Activated CD8-positive, alpha-beta memory T cell treated with anti-CD3 and anti-CD28 coated beads, Interleukin-2, amount 10 ng/mL, durations not matched to agents 7 days and 5 days (primary cell): ENCODE measurements at regions of chr2 and their contacts with region 1.

Region 1: DNA sequence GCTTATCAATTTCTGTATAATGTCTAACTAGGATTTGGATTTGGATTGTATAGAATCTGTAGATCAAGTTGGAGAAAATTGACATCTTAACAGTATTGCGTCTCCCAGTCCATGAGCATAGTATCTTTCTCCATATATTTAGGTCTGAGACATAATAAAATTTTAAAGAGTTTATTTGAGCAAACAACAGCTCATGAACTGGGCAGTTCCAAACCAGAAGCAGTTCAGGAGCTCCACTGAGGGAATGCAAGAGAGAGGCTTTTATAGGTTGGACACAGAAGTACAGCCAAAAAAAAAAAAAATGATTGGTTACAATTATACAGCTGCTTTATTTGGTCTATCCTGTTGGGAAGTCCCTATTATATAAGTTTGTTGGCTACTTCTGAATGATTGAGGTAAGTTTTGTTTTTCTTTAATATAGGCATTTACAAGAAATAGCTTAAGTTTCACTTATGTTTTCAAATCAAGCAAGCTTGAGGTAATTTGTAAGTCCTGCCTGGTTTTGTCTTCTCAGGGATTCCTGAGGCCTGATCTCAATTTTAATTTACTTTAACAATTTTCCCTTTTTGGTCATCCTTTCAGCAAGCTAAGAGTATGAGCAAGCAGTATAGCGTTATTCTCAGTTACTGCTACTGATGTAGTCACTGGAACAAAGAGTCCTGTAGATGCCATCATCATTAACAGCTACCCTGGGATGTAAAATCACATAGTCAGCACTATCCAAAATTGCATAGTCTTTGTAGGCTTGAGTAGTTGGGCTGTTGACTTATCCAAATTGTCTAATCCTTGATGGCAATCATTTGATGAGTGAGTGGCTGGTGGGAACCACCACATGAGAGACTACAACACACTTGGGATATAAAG is 27.5 kb upstream of the RUFY4 start:
- DNase-seq: no peak
- ATAC-seq: peak; percentile 27
- H3K4me3 Mint-ChIP-seq: no peak overlapping the region
- H3K27ac Mint-ChIP-seq: peak overlapping the region; percentile 76
- H3K4me1 Mint-ChIP-seq: peaks cover 29% of the 10 kb centered on the region
- H3K27me3 Mint-ChIP-seq: no peaks in the 10 kb centered on the region

Region 2: DNA sequence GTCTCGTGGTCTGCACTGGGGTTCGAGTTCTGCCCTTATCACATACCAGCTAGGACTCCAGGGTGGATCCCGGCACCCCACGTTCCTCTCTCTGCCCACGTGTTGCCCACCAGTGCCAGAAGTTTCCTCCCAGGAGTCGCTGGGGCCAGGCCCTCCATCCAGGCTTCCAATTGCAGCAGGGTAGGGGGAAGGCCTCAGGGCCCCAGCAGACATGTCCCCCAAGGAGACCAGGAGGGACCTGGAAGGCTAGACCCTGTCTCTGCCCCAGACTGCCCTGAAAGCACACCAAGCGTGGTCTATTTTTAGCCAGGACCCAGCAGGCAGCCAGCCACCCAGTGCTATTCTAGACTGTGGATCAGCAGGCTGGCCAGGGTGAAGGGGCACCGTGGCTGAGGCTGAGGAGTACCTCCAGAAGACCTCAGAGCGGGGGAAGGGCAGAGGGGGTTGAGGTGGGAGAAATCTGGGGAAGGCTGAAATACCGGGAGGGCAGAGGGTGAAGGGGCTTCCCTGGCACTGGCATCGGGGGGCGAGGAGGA is 19.9 kb before region 1 on chr2:
- CTCF ChIA-PET with region 1: no interaction called
- DNase-seq: no peak
- ATAC-seq: no peak
- H3K4me3 Mint-ChIP-seq: no peak overlapping the region
- H3K27ac Mint-ChIP-seq: no peak overlapping the region
- H3K4me1 Mint-ChIP-seq: no peaks in the 10 kb centered on the region
- H3K27me3 Mint-ChIP-seq: peaks cover 3% of the 10 kb centered on the region

Region 3: GRCh38 chr2:218066926-218067515 is 25.5 kb after region 1 on chr2:
- CTCF ChIA-PET with region 1: interaction called, 10 read pairs
- DNase-seq: no peak
- ATAC-seq: no peak
- H3K4me3 Mint-ChIP-seq: no peak overlapping the region
- H3K27ac Mint-ChIP-seq: no peak overlapping the region
- H3K4me1 Mint-ChIP-seq: peaks cover 14% of the 10 kb centered on the region
- H3K27me3 Mint-ChIP-seq: peaks cover 13% of the 10 kb centered on the region

Region 4: DNA sequence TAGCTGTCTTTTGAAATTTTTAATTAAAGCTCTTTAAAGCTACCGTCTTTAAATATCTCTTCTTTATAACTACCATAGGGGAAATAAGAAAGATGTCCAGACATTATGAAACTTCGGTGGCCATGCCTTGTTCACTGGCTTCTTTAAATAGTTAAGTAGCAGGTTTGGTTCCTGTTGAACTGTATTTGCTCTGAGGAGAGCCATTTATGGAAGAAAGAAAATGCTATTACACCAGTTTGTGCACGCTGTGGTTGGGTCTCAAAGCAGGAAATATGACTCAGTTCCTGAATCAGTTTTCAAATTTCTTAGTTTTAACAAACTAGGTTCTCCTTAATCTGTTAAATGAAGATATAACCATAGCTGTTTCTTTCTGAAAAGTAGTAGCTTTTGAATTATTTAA is 187.7 kb after region 1 on chr2:
- CTCF ChIA-PET with region 1: no interaction called
- DNase-seq: peak; percentile 80
- ATAC-seq: peak; percentile 88
- H3K4me3 Mint-ChIP-seq: peak overlapping the region; percentile 42
- H3K27ac Mint-ChIP-seq: peak overlapping the region; percentile 90
- H3K4me1 Mint-ChIP-seq: peaks cover 75% of the 10 kb centered on the region
- H3K27me3 Mint-ChIP-seq: no peaks in the 10 kb centered on the region